ENCODE measurements at regions of chr5 and their contacts with region 1.

Region 1: DNA sequence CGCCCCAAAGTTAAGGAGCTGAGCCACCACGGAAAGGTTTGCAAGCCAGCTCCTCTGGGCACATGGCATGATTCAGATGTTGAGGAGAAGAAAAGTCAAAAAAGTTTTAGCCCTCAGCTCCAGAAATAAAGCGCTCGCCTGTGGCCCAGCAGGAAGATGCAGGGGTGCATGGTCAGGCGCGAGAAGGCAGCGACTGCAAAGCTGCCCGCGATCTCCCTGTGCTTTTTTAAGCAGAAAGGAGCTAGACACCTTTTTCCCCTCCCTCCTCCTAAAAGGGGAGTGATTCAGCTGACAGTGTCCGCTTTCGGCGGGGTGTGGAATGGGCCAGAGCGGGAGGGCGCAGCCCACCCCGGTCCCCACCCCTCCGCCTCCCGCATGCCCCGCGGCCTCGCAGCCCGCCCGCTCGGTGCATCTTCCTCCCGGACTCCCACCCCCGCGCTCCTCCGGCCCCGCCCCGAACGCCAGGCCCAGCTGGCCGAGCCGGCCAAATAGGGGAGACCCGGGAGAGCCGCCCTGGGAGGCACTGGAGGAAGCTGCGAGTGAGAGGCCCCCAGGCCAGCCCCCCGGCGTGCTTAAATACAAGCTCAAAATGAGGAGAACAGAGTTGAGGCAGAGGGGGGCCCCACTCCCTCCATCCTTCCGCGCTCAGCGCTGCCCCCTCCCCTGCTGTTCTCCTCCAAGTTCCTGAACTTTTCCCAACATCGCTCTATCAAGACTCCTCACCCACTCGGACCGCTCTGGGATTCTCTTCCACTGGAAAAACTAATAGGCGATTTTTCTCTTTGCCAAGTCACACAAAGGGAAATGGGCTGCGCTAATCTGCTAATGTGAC is at the start of gene ADAMTS12:
- DNase-seq: peak; percentile 14
- H3K4me3 Mint-ChIP-seq: peak within 1 kb of the TSS; percentile 67
- H3K27ac Mint-ChIP-seq: no peak within 1 kb of the TSS
- H3K4me1 Mint-ChIP-seq: peaks cover 27% of the 10 kb centered on the region
- H3K27me3 Mint-ChIP-seq: no peaks in the 10 kb centered on the region
- CTCF ChIP-seq: no peak
- total RNA-seq, gene ADAMTS12: 1.2 TPM in 2 replicates

Region 2: GRCh38 chr5:33772380-33772897 is 119.6 kb before region 1 on chr5:
- CTCF ChIA-PET with region 1: no interaction called
- intact Hi-C with region 1: no loop called
- DNase-seq: no peak
- H3K4me3 Mint-ChIP-seq: no peak overlapping the region
- H3K27ac Mint-ChIP-seq: no peak overlapping the region
- H3K4me1 Mint-ChIP-seq: no peaks in the 10 kb centered on the region
- H3K27me3 Mint-ChIP-seq: no peaks in the 10 kb centered on the region
- CTCF ChIP-seq: no peak

Region 3: DNA sequence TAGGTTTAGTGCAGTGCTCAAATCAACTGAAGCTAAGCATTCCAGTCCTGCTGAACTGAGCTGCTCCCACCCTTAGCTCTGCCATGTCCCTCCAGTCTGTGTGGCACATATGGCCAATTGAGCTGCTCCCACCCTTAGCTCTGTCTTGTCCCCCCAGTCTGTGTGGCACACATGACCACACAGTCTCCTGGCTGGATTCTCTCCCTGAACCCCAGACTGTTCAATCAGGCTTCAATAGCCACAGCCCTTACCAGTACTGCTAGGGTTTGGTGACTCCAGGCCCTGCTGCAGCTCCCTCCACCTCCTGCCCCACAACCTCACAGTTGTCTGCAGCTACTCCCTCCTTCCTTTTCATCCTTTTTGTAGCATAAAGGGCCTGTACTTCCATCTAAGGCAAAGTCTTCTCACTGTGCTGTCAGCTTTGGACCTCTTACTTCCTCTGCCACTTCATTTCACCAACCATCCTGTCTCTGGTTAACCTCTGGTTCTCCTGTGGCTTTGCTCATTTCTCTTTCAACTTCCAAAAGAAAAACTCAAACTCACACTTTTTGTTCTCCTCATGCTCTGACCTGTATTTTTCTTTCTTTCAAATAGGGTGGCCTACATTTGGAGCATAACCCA is 51.0 kb before region 1 on chr5:
- CTCF ChIA-PET with region 1: no interaction called
- intact Hi-C with region 1: no loop called
- DNase-seq: no peak
- H3K4me3 Mint-ChIP-seq: no peak overlapping the region
- H3K27ac Mint-ChIP-seq: no peak overlapping the region
- H3K4me1 Mint-ChIP-seq: no peaks in the 10 kb centered on the region
- H3K27me3 Mint-ChIP-seq: no peaks in the 10 kb centered on the region
- CTCF ChIP-seq: no peak

Region 4: DNA sequence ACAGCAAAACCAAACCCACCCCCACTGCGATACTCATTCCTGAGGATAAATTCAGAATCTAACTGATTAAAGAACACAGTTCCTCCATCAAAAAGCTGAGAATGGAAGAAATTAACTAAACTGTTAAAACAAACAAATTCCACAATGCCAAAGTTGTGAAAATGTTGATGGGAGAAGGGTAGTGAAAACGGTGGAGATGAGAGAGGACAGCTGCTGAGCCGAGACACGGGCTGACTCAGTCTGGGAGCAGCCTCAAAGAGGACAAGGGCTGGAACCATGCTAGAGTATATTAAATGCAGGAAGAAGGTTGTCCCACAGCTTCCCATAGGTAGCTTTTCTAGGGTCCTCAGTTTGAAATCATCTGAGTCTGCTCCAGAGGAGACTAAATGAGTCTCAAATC is 14.6 kb before region 1 on chr5:
- CTCF ChIA-PET with region 1: no interaction called
- intact Hi-C with region 1: no loop called
- DNase-seq: no peak
- H3K4me3 Mint-ChIP-seq: no peak overlapping the region
- H3K27ac Mint-ChIP-seq: no peak overlapping the region
- H3K4me1 Mint-ChIP-seq: no peaks in the 10 kb centered on the region
- H3K27me3 Mint-ChIP-seq: peaks cover 13% of the 10 kb centered on the region
- CTCF ChIP-seq: no peak

Region 5: DNA sequence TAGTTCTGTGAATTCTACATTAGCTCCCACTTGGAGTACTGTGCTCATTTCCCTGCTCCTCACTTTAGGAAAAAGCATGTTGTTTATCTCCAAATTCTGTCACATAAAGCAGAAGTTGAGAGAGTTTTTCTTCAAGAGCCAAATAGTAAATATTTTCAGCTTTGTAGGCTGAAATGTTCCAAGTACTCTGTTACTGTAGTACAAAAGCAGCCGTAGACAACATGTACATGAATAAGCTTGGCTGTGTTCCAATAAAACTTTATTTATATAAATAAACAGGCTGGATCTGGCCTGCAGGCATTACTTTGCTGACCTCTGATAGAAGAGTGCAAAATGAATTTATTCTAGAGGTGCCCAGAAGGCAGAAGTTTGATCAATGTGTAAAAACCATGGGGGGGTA is 1228.7 kb after region 1 on chr5:
- CTCF ChIA-PET with region 1: no interaction called
- intact Hi-C with region 1: loop called (anchors 5 kb)
- DNase-seq: no peak
- H3K4me3 Mint-ChIP-seq: no peak overlapping the region
- H3K27ac Mint-ChIP-seq: no peak overlapping the region
- H3K4me1 Mint-ChIP-seq: no peaks in the 10 kb centered on the region
- H3K27me3 Mint-ChIP-seq: no peaks in the 10 kb centered on the region
- CTCF ChIP-seq: no peak

Measured in Calu3 (cell line).